Activated naive CD4-positive, alpha-beta T cell treated with anti-CD3 and anti-CD28 coated beads for 36 hours (primary cell): ENCODE measurements at regions of chr9 and their contacts with region 1.

Region 1: GRCh38 chr9:129835021-129835871 is at the starts of genes C9orf78 and USP20:
- DNase-seq: peak; percentile 97
- H3K4me3 Mint-ChIP-seq: peak within 1 kb of the TSS; percentile 97
- H3K27ac Mint-ChIP-seq: peak within 1 kb of the TSS; percentile 94
- H3K4me1 Mint-ChIP-seq: peaks cover 56% of the 10 kb centered on the region
- H3K27me3 Mint-ChIP-seq: no peaks in the 10 kb centered on the region
- total RNA-seq, gene C9orf78: 45.3 to 45.7 TPM
- total RNA-seq, gene USP20: 54.7 to 54.9 TPM

Region 2: GRCh38 chr9:129696938-129697650 is 138.2 kb before region 1 on chr9:
- CTCF ChIA-PET with region 1: no interaction called
- intact Hi-C with region 1: no loop called
- DNase-seq: peak; percentile 27
- H3K4me3 Mint-ChIP-seq: peak overlapping the region; percentile 69
- H3K27ac Mint-ChIP-seq: peak overlapping the region; percentile 65
- H3K4me1 Mint-ChIP-seq: peaks cover 5% of the 10 kb centered on the region
- H3K27me3 Mint-ChIP-seq: peaks cover 25% of the 10 kb centered on the region

Region 3: GRCh38 chr9:129802851-129803675 is 32.2 kb before region 1 on chr9 and contains the start of gene TOR1B:
- CTCF ChIA-PET with region 1: no interaction called
- intact Hi-C with region 1: loop called (anchors 1 kb)
- DNase-seq: peak; percentile 96
- H3K4me3 Mint-ChIP-seq: peak within 1 kb of the TSS; percentile 84
- H3K27ac Mint-ChIP-seq: peak within 1 kb of the TSS; percentile 90
- H3K4me1 Mint-ChIP-seq: peaks cover 24% of the 10 kb centered on the region
- H3K27me3 Mint-ChIP-seq: no peaks in the 10 kb centered on the region
- total RNA-seq, gene TOR1B: 18.8 to 21.3 TPM

Region 4: GRCh38 chr9:129823935-129824601 is 11.2 kb before region 1 on chr9 and contains the start of gene TOR1A:
- CTCF ChIA-PET with region 1: interaction called, 5 read pairs
- intact Hi-C with region 1: loop called (anchors 1 kb)
- DNase-seq: peak; percentile 96
- H3K4me3 Mint-ChIP-seq: peak within 1 kb of the TSS; percentile 79
- H3K27ac Mint-ChIP-seq: peak within 1 kb of the TSS; percentile 77
- H3K4me1 Mint-ChIP-seq: peaks cover 13% of the 10 kb centered on the region
- H3K27me3 Mint-ChIP-seq: no peaks in the 10 kb centered on the region
- total RNA-seq, gene TOR1A: 26.2 to 28.2 TPM

Region 5: DNA sequence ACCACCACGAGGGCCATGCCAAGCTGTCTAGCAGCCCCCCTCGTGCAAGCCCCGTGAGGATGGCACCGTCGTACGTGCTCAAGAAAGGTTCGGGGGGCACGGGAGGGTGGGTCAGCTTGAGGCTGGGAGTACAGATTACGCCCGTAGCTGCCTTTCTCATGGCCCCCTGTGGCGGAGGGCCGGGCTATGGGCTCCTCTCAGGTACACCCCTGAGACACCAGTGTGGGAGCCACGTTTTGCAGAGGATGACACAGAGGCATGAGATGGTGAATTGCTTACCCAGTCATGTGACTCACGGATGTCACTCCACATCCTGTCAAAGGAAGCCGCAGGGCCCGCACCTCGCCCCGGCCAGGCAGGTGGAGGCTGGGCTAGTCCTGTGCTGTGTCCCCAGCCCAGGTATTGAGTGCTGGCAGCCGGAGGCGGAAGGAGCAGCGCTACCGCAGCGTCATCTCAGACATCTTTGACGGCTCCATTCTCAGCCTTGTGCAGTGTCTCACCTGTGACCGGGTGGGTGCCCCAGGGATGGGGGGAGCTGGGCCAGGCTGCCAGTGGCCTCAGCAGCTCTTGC is 33.8 kb after region 1 on chr9:
- CTCF ChIA-PET with region 1: interaction called, 5 read pairs
- intact Hi-C with region 1: loop called (anchors 1 kb)
- DNase-seq: peak; percentile 96
- H3K4me3 Mint-ChIP-seq: peak overlapping the region; percentile 66
- H3K27ac Mint-ChIP-seq: peak overlapping the region; percentile 91
- H3K4me1 Mint-ChIP-seq: peaks cover 72% of the 10 kb centered on the region
- H3K27me3 Mint-ChIP-seq: no peaks in the 10 kb centered on the region

Region 6: GRCh38 chr9:129998491-129999140 is 163.4 kb after region 1 on chr9:
- CTCF ChIA-PET with region 1: no interaction called
- intact Hi-C with region 1: no loop called
- DNase-seq: peak; percentile 47
- H3K4me3 Mint-ChIP-seq: peak overlapping the region; percentile 42
- H3K27ac Mint-ChIP-seq: peak overlapping the region; percentile 76
- H3K4me1 Mint-ChIP-seq: peaks cover 76% of the 10 kb centered on the region
- H3K27me3 Mint-ChIP-seq: no peaks in the 10 kb centered on the region

Region 7: DNA sequence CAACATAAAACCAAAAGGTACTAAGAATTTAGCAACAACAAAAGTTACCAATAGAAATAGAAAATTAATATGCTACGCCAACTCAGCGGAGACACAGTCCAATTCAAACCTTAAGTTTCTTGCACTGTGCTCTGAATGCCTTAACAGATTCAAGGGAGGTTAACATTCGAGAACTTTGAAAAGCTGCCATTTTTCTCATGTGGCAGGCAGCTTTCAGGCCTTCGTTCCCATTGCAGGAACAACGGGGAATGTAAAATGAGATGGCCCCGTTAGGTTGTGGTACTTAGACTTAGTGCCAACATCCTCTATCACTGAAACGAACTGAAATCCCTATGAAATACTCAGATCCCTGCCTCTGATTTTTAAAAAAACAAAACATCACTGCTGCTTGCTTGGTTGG is 185.4 kb after region 1 on chr9:
- CTCF ChIA-PET with region 1: no interaction called
- intact Hi-C with region 1: no loop called
- DNase-seq: no peak
- H3K4me3 Mint-ChIP-seq: no peak overlapping the region
- H3K27ac Mint-ChIP-seq: peak overlapping the region; percentile 96
- H3K4me1 Mint-ChIP-seq: peaks cover 84% of the 10 kb centered on the region
- H3K27me3 Mint-ChIP-seq: no peaks in the 10 kb centered on the region

Region 8: DNA sequence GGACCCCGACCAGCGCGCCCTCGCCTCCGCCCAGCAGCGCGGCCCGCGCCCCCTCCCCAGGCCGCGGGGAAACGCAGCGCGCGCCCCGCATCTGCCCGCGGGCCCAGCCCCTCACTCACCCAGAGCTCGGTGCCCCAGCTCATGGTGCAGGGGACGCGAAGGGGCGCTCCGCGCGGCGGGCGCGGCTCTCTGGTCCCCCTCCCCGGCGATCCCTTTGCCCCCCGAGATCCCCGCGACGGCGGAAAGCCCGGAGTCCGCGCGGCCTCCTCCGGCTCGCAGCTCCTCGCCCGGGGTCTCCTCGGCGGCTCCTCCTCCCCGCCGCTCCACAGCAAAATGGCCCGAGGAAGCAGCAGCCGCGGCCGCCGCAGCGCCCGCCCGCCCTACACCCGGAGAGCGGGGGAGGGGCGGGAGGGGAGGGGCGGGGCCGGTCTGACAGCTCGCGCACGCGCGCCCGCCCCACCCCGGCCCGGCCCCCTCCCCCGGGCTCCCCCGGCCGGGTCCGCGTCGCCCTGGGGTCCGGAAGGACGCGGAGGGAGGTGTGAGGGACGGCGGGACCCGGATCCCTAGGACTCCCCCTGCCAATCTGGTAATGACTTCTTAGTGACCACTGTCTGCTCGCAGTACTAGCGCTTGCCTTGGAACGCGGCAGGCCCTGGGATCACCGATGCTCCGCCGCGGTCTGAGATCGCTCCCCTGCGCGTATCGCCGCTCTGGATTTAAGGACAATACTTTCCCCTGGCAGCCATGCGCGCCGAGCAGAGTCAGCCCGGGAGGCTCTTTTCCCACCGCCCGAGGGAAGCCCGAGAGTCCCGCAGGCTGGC is 207.8 kb after region 1 on chr9 and contains the start of gene FNBP1:
- CTCF ChIA-PET with region 1: interaction called, 3 read pairs
- intact Hi-C with region 1: loop called (anchors 2 kb)
- DNase-seq: peak; percentile 81
- H3K4me3 Mint-ChIP-seq: peak within 1 kb of the TSS; percentile 100
- H3K27ac Mint-ChIP-seq: peak within 1 kb of the TSS; percentile 100
- H3K4me1 Mint-ChIP-seq: peaks cover 39% of the 10 kb centered on the region
- H3K27me3 Mint-ChIP-seq: no peaks in the 10 kb centered on the region
- total RNA-seq, gene FNBP1: 126 to 128 TPM

Region 9: DNA sequence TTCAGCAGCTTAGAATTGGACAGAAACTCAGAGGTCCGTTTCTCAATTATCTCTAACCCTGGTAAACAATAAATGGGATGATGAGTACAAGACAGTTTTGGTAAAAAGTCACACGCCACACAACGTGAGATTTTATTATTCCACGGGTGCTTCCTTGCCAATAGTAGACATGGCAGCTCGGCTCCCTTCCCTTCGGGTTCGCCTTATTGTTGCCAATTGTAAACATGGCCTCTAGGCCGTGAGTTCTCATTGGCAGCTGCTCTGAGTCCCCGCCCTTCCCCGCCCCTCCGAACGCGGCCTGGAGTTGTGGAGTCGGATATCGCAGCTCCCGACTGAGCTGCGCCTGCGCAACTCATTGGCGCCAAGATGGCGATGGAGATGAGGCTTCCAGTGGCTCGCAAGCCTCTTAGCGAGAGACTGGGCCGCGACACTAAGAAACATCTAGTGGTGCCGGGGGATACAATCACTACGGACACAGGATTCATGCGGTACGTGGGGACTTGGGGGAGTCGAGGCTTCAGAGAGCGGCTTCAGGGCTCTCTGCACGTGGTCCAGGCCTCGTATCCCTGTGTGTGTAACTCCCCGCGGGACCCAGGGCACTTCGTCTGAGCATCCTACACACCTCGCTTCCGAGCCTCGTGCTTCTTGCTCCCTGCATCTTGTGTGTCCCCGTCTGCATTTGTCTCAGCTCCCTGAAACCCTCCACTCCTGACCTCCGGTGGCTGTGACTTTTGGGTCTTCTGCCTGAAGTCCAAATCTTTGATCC is 858.4 kb after region 1 on chr9 and contains the start of gene EXOSC2:
- CTCF ChIA-PET with region 1: no interaction called
- intact Hi-C with region 1: loop called (anchors 5 kb)
- DNase-seq: peak; percentile 99
- H3K4me3 Mint-ChIP-seq: peak within 1 kb of the TSS; percentile 90
- H3K27ac Mint-ChIP-seq: peak within 1 kb of the TSS; percentile 87
- H3K4me1 Mint-ChIP-seq: peaks cover 38% of the 10 kb centered on the region
- H3K27me3 Mint-ChIP-seq: no peaks in the 10 kb centered on the region
- total RNA-seq, gene EXOSC2: 70.1 to 72.6 TPM